CD4-positive, alpha-beta memory T cell (primary cell): ENCODE measurements at regions of chr6 and their contacts with region 1.

Region 1: DNA sequence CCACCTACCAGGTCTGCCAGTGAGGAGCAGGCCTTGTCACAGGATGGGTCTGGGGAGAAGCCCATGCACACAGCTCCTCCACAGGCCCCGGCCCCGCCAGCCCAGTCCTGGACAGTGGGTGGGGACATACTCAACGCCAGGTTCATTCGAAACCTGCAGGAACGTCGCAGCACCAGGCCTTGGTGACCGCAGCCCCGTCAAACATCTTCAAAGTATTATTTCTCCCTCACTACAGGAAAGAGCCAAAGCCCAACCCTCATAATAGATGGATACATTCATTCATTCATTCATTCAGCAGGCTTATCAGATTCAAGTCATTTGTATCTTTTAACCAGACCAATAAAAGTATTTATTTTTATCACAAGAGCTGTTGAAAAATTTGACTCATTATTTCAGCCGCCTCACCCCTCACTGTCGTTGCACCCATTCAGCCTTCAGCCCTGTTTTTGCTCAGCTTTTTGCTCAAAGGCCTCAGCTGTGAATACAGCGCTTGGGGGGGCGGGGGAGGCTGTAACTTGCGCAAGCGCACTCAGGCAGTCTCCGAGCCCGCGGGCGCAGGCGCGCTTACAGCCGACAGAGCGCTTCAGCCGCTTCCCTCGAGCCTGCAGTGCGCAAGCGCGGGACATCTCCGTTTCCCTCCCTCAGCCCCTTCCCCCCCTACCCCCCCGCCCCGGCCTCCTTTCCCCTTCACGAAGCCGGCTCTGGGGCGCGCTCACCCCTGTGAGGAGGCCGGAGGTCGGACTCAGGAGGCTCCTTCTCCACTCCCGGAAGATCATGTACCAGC is at the start of gene C6orf136:
- DNase-seq: peak; percentile 86 to 94 (median 93)
- H3K4me3 ChIP-seq: peak within 1 kb of the TSS; percentile 74 to 91
- H3K4me3 Mint-ChIP-seq: peak within 1 kb of the TSS; percentile 85 to 92 (median 89)
- H3K27ac ChIP-seq: peak within 1 kb of the TSS; percentile 89
- H3K27ac Mint-ChIP-seq: peak within 1 kb of the TSS; percentile 85 to 95 (median 92)
- H3K4me1 ChIP-seq: peaks cover 20% of the 10 kb centered on the region
- H3K4me1 Mint-ChIP-seq: peaks cover 17 to 29% (median 22%) of the 10 kb centered on the region in 4 donors
- H3K27me3 ChIP-seq: no peaks in the 10 kb centered on the region
- H3K27me3 Mint-ChIP-seq: no peaks in the 10 kb centered on the region
- total RNA-seq, gene C6orf136: 29.3 to 35.0 TPM

Region 2: DNA sequence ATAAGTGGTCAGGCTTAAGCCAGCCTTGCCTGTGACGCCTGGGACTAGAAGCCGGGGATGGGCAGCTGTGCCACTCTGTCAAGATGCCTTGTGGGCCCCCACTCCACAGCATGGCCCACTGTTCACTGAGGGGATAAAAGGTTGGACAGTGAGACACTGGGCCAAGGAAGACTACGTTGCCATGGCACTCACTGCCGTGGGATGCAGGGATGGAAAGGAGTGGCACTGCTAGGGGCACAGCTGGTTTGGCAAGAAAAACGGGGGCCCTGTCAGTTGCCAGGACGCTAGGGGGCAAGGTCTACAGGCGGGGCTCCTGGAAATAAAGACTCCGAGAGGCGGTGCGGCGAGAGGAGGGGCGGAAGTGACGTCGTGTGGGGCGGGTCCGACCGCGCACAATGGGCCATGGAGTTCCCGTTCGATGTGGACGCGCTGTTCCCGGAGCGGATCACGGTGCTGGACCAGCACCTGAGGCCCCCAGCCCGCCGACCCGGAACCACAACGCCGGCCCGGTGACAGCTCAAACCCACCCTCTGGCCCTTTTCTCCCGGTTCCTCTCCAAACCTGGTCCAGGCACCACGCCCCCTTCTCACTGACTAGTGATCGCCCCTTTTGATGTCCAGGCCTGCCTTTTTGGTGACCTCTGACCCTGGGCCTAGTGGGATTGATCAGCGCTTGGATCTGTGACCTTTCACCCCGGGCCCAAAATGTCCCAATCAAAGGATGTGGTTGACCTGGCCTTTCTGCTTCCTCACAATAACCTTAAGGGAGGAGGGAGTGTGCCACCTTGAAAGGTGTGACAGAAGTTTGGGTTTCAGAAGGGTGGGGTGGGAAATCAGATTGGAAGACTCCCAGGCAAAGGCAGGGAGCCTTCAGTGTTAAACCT is 19.9 kb before region 1 on chr6 and contains the start of gene ATAT1:
- CTCF ChIA-PET with region 1: interaction called, 6 read pairs
- POLR2A ChIA-PET with region 1: interaction called, 5 read pairs
- intact Hi-C with region 1: loop called (anchors 1 kb)
- DNase-seq: peak; percentile 85 to 94 (median 86)
- H3K4me3 ChIP-seq: peak within 1 kb of the TSS; percentile 5 to 78
- H3K4me3 Mint-ChIP-seq: peak within 1 kb of the TSS; percentile 91 to 95 (median 92)
- H3K27ac ChIP-seq: peak within 1 kb of the TSS; percentile 89
- H3K27ac Mint-ChIP-seq: peak within 1 kb of the TSS; percentile 91 to 99 (median 97)
- H3K4me1 ChIP-seq: peaks cover 14% of the 10 kb centered on the region
- H3K4me1 Mint-ChIP-seq: peaks cover 18 to 30% (median 24%) of the 10 kb centered on the region in 4 donors
- H3K27me3 ChIP-seq: no peaks in the 10 kb centered on the region
- H3K27me3 Mint-ChIP-seq: no peaks in the 10 kb centered on the region
- total RNA-seq, gene ATAT1: 8.3 to 9.4 TPM